ENCODE measurements at regions of chr12 and their contacts with region 1.

Region 1: GRCh38 chr12:102484428-102484958 is 4.1 kb upstream of the IGF1 start:
- DNase-seq: peak in 4 of 5 donors; percentile 23 to 37 (median 28)
- H3K4me3 ChIP-seq: no peak overlapping the region
- H3K4me3 Mint-ChIP-seq: peak overlapping the region; percentile 46 to 85 (median 77)
- H3K27ac ChIP-seq: no peak overlapping the region
- H3K27ac Mint-ChIP-seq: peak overlapping the region in 3 of 7 donors; percentile 31 to 76 (median 66)
- H3K4me1 ChIP-seq: peaks cover under 1% of the 10 kb centered on the region
- H3K4me1 Mint-ChIP-seq: peaks cover 2 to 9% (median 5%) of the 10 kb centered on the region in 4 donors
- H3K27me3 ChIP-seq: no peaks in the 10 kb centered on the region
- H3K27me3 Mint-ChIP-seq: peaks cover 2 to 6% of the 10 kb centered on the region in 2 donors

Region 2: DNA sequence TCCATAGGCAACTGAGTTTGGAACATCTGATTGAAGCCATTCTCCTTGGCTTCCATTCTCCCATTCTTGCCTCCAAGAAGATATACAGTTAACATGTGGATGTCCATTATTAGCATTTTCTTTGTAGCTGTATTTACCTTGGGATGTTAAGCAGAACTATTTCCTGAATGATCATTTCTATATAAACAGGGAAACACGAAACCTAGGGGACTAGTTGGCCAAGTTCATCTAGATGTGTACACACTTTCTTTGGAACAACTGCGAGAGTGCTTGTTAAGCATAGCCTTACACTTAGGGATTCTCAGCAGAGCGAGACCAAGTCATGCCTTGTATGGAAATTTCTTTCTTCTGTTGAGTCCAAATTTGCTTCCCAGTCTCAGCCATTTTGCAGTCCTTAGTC is 565.0 kb before region 1 on chr12:
- CTCF ChIA-PET with region 1: interaction called, 16 read pairs
- POLR2A ChIA-PET with region 1: no interaction called
- intact Hi-C with region 1: loop called (anchors 1 kb)
- DNase-seq: no peak
- H3K4me3 ChIP-seq: no peak overlapping the region
- H3K4me3 Mint-ChIP-seq: no peak overlapping the region
- H3K27ac ChIP-seq: no peak overlapping the region
- H3K27ac Mint-ChIP-seq: no peak overlapping the region
- H3K4me1 ChIP-seq: peaks cover 10% of the 10 kb centered on the region
- H3K4me1 Mint-ChIP-seq: peaks cover 0 to 14% (median 5%) of the 10 kb centered on the region in 4 donors
- H3K27me3 ChIP-seq: no peaks in the 10 kb centered on the region
- H3K27me3 Mint-ChIP-seq: no peaks in the 10 kb centered on the region

Region 3: GRCh38 chr12:101939856-101940265 is 544.6 kb before region 1 on chr12:
- CTCF ChIA-PET with region 1: interaction called, 56 read pairs
- POLR2A ChIA-PET with region 1: no interaction called
- intact Hi-C with region 1: loop called (anchors 1 kb)
- DNase-seq: peak; percentile 46 to 54 (median 49)
- H3K4me3 ChIP-seq: no peak overlapping the region
- H3K4me3 Mint-ChIP-seq: no peak overlapping the region
- H3K27ac ChIP-seq: no peak overlapping the region
- H3K27ac Mint-ChIP-seq: no peak overlapping the region
- H3K4me1 ChIP-seq: no peaks in the 10 kb centered on the region
- H3K4me1 Mint-ChIP-seq: peaks cover 0 to 2% (median 0%) of the 10 kb centered on the region in 4 donors
- H3K27me3 ChIP-seq: no peaks in the 10 kb centered on the region
- H3K27me3 Mint-ChIP-seq: peaks cover 7 to 11% of the 10 kb centered on the region in 2 donors

Region 4: DNA sequence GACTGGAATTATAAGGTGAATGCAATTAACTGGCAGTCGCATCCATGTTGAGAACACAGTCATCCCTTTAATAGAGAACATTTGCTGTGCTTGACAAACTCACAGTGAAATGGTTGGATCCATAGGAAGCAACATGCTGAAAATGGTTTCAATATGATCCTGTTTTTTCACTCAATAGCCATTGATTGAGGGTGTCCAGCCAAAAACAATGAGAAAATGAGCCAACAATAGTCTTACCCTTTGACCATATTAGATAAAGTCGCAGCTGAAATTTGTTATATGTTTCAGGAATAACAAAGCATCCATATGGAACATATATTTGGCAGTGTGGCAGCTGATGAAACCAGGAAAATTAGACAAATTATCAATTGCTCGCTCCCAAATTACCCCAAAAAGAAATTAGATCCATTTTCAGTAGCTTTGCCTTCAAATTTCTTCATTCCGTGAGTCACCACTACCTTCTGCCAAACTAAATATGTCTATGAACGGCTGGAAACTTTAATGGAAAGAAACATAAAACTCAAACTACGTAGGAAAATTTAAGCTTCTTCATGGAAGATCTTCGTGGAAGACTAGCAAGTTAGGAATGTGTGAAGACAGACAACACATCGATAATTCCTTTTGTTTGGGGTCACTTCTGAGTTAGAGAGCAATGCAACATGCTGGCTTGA is 21.6 kb before region 1 on chr12:
- CTCF ChIA-PET with region 1: interaction called, 17 read pairs
- POLR2A ChIA-PET with region 1: no interaction called
- intact Hi-C with region 1: no loop called
- DNase-seq: no peak
- H3K4me3 ChIP-seq: no peak overlapping the region
- H3K4me3 Mint-ChIP-seq: no peak overlapping the region
- H3K27ac ChIP-seq: no peak overlapping the region
- H3K27ac Mint-ChIP-seq: no peak overlapping the region
- H3K4me1 ChIP-seq: no peaks in the 10 kb centered on the region
- H3K4me1 Mint-ChIP-seq: no peaks in the 10 kb centered on the region
- H3K27me3 ChIP-seq: no peaks in the 10 kb centered on the region
- H3K27me3 Mint-ChIP-seq: peaks cover 1 to 6% of the 10 kb centered on the region in 2 donors

Region 5: DNA sequence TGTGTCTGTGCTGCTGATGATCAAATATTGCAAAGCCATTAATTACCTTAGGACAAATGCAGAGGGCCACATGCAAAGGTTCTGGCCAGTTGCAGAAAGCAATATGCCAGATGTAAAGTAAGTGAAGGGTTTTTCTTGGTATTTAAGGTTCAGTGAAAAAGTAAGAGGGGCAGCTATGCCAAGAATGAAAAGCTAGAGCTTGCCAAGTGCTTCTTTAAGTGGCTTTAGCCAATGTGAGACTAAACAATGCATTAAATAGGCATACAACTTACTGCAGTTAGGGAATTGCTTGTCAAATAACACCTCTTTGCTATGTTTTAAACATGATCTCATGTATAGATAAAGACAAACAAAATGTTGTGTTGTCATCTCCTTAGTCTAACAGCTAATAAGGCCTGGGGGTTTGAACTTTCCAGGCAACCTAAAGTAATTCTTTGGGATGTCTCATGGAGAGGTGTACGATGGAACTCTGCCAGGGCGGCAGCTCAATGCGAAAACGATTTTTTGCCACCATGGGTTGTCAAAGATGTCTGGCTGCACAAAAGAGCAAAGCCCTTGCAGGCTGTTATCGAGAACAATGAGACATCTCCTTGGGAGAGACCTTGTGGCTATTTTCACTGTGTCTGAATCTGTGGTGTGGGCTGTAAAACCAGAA is 16.1 kb before region 1 on chr12:
- CTCF ChIA-PET with region 1: interaction called, 51 read pairs
- POLR2A ChIA-PET with region 1: no interaction called
- intact Hi-C with region 1: no loop called
- DNase-seq: no peak
- H3K4me3 ChIP-seq: no peak overlapping the region
- H3K4me3 Mint-ChIP-seq: no peak overlapping the region
- H3K27ac ChIP-seq: no peak overlapping the region
- H3K27ac Mint-ChIP-seq: no peak overlapping the region
- H3K4me1 ChIP-seq: no peaks in the 10 kb centered on the region
- H3K4me1 Mint-ChIP-seq: no peaks in the 10 kb centered on the region
- H3K27me3 ChIP-seq: no peaks in the 10 kb centered on the region
- H3K27me3 Mint-ChIP-seq: peaks cover 1% of the 10 kb centered on the region in 2 donors

Region 6: DNA sequence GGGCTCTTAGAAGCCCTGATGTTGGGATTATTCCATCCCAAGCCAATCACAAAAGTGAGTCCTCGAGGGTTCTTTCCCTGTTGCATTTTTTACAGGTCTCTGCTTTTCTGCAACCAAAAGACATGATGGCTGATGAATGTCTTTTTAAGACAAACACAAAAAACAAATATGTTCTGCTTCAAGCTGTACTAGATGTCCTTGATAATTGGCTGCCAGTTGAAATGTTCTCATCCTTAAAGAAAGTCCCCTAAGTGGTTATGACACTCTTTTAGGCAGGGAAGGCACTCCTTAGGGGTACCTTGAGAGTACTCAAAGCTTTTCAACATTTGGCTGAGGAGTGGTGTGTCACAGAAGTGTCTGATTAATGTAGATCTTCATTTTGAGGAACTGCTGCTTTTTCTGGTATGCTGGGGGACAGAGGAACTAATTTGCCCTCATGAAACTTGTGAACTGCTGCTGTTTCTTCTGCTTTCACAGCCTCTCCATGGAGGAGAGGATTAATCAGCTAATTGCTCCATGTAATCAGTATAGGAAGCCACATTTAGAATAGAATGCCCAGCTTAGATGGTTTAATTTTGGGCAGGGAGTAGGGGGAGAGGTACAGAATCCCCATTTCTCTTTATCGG is 18.7 kb after region 1 on chr12:
- CTCF ChIA-PET with region 1: interaction called, 12 read pairs
- POLR2A ChIA-PET with region 1: no interaction called
- intact Hi-C with region 1: no loop called
- DNase-seq: no peak
- H3K4me3 ChIP-seq: no peak overlapping the region
- H3K4me3 Mint-ChIP-seq: no peak overlapping the region
- H3K27ac ChIP-seq: no peak overlapping the region
- H3K27ac Mint-ChIP-seq: no peak overlapping the region
- H3K4me1 ChIP-seq: no peaks in the 10 kb centered on the region
- H3K4me1 Mint-ChIP-seq: no peaks in the 10 kb centered on the region
- H3K27me3 ChIP-seq: no peaks in the 10 kb centered on the region
- H3K27me3 Mint-ChIP-seq: peaks cover 0 to 6% of the 10 kb centered on the region in 2 donors

Region 7: DNA sequence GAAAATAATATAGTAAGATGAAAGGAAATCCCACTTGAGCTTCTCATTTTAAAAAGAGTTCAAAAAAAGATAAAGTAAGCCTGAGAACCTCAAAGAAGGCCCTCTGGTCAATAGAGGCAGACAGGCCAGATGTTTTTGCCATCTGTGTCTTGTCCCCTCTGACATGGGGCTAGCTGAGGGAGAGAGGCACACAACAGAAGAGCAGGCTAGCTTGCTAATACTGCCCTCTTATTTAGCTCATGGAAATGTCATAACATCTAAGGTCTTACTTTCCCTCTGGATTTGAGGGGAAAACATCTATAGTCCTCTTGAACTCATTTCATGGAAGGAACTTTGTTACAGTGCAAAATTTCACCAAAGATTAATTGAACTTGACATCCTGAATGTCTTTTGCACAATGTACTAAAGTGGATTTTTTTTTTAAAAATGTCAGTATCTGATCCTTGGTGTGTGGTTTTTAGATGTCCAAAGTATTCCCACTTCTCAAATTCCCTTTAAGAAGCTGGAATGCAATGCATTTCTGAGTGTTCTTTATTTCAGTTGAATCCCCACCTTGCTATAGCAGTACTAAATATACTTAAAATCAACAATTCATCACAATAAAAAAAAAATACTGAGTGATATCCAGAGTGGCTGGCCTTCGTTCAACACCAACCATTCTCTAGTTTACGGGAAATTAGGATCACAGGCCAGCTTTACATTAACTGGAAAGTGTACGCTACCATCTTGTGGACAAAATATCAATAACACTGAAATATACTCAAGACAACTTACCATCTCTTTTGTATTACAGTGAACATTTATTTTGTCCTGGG is 255.9 kb after region 1 on chr12:
- CTCF ChIA-PET with region 1: no interaction called
- POLR2A ChIA-PET with region 1: no interaction called
- intact Hi-C with region 1: no loop called
- DNase-seq: no peak
- H3K4me3 ChIP-seq: no peak overlapping the region
- H3K4me3 Mint-ChIP-seq: no peak overlapping the region
- H3K27ac ChIP-seq: no peak overlapping the region
- H3K27ac Mint-ChIP-seq: no peak overlapping the region
- H3K4me1 ChIP-seq: no peaks in the 10 kb centered on the region
- H3K4me1 Mint-ChIP-seq: no peaks in the 10 kb centered on the region
- H3K27me3 ChIP-seq: no peaks in the 10 kb centered on the region
- H3K27me3 Mint-ChIP-seq: no peaks in the 10 kb centered on the region